ENCODE measurements at regions of chr1 and their contacts with region 1.

Region 1: DNA sequence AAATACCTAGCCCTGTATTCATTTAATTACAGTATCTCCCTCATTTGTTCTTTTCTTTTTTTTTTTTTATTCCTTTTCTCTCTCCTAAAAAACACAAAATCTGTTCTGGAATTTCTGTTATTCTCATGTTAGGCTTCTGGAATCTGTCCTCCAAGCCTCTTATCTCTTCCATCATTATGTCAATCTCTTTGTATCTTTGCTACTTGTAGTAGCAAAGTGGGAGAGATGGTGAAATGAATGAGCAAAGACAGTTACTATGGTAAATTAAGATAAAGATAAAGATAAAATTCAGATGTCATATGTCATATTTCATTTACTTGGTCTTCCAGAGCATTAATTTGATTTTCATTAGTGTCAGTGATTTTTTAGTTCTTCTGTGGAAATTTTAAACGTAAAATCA is 155.1 kb downstream of the FGGY start:
- DNase-seq: no peak
- H3K27ac ChIP-seq: no peak overlapping the region
- CTCF ChIP-seq: no peak

Region 2: DNA sequence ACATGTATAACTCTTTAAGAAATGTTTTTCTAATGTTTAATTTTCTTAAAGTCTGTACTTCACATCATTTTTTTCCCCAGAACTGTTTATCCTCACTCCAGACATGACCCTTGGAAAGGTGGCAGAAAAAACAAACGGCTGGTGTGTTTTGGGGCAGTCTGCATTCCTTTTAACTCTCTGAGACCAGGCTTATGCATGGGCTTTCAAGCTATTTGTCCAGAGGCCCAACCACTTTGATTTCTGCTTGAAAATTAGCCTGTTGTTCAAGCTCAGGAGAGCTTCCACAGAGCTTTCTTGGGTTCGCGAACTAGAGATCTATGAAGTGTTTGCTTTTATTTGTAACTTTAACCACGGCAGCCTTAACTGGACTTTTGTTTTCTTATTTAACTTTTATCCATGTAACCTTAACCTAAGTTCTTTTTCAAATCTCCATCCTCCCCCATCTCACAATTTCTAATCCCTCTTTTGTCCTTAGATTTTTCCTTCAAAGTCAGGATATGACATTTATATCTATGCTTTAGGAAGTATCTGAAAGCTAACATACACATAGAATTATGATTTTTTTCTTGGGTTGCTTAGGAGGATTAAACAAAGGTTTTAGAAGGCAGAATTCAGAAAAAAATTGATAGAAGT is 43.3 kb before region 1 on chr1:
- CTCF ChIA-PET with region 1: interaction called, 10 read pairs
- POLR2A ChIA-PET with region 1: no interaction called
- DNase-seq: no peak
- H3K27ac ChIP-seq: no peak overlapping the region
- CTCF ChIP-seq: no peak